ENCODE measurements at regions of chr1 and their contacts with region 1.

Region 1: DNA sequence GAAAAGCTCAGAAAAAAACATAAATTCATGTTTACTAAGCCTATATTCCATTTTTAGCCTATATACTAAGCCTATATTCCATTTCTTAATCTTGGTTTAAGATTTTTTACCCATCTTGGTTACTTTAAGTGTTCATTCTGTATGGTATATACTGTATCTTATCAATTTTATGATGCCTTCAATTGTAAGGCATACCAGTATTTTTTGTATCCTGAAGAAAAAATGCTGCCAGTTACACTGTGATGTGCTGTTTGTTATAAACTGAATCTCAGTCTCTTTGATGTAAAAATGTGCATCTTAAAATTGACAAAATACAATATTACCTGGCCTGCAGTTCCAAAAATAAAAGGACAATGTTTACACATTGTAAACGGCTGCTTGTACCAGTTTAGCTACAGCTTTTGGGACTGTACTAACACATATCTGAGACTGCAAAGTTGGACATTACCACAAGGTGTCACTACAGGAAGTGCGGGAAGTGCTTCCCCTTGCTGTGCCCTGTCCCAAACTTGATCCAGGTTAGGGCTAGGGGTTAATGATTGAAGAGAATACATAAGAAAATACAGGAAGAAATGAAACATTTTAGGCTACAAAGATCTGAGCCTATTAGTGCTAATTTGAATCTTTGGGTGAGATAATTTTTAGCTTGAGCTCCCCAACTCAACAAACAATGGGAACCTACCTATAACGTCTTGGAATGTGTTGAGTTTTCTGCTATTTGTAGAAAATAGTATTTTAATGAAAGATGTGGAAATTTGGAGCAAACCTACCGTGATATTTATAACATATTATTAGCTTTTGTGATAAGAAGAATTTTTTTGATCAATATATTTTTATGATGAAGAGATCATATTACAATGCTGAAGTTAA is 108.9 kb downstream of the LBR start:
- DNase-seq: peak; percentile 66 to 67
- ATAC-seq: peak; percentile 98 to 100
- H3K4me3 ChIP-seq: no peak overlapping the region
- H3K27ac ChIP-seq: no peak overlapping the region
- H3K4me1 ChIP-seq: no peaks in the 10 kb centered on the region
- CTCF ChIP-seq: peak; percentile 78
- EP300 ChIP-seq: no peak
- POLR2A ChIP-seq: no peak
- RAD21 ChIP-seq: peak; percentile 60 to 71

Region 2: GRCh38 chr1:225329041-225329440 is 10.1 kb after region 1 on chr1:
- CTCF ChIA-PET with region 1: interaction called, 10 read pairs
- POLR2A ChIA-PET with region 1: no interaction called
- DNase-seq: no peak
- ATAC-seq: no peak
- H3K4me3 ChIP-seq: no peak overlapping the region
- H3K27ac ChIP-seq: no peak overlapping the region
- H3K4me1 ChIP-seq: no peaks in the 10 kb centered on the region
- CTCF ChIP-seq: no peak
- EP300 ChIP-seq: no peak
- POLR2A ChIP-seq: no peak
- RAD21 ChIP-seq: no peak

Region 3: DNA sequence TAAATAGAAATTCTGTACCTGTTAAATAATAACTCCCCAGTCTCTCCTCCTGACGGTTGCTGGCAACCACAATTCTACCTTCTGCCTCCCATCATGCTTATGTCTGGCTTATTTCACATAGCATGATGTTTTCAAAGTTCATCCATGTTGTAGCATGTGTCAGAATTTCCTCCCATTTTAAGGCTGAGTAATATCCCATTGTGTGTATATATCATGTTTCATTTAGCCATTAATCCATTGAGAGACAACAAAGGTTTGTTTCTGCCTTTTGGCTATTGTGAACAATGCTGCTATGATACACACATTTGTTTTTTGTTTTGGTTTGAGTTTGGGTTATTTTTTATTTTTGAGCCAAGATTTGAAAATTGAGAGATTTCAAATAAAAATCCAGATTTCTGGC is 36.9 kb after region 1 on chr1:
- CTCF ChIA-PET with region 1: interaction called, 11 read pairs
- POLR2A ChIA-PET with region 1: no interaction called
- DNase-seq: no peak
- ATAC-seq: no peak
- H3K4me3 ChIP-seq: no peak overlapping the region
- H3K27ac ChIP-seq: no peak overlapping the region
- H3K4me1 ChIP-seq: no peaks in the 10 kb centered on the region
- CTCF ChIP-seq: no peak
- EP300 ChIP-seq: no peak
- POLR2A ChIP-seq: no peak
- RAD21 ChIP-seq: no peak

Measured in A549 (cell line).